Kidney (tissue), 22 donors: ENCODE measurements at regions of chr11 and their contacts with region 1.

Region 1: GRCh38 chr11:132937016-132937415 is 595.3 kb downstream of the OPCML start:
- DNase-seq: peak in 1 of 5 donors; percentile 44
- H3K4me3 ChIP-seq: no peak overlapping the region
- H3K27ac ChIP-seq: no peak overlapping the region
- H3K4me1 ChIP-seq: no peaks in the 10 kb centered on the region
- H3K27me3 ChIP-seq: no peaks in the 10 kb centered on the region
- CTCF ChIP-seq: no peak

Region 2: DNA sequence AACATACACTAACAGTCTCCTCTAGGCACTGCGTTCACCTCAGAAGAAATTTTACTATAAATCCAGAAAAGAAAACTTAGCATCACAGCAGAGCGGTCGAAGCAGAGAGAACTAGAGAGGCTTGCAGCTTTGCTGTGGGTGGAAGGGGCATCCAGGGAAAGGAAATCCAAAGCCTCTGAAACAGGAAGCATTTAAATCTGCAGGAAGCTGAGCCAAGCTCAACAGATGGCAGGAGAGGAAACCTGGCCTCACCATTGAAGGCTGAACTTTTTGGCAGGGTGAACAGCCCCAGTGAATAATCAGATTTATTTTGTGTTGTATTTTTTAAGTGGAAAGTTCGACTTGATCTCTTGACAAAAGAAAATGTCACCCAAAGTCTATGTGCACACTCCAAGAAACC is 262.9 kb before region 1 on chr11:
- intact Hi-C with region 1: loop called (anchors 10 kb)
- DNase-seq: peak in 1 of 5 donors; percentile 34
- H3K4me3 ChIP-seq: no peak overlapping the region
- H3K27ac ChIP-seq: no peak overlapping the region
- H3K4me1 ChIP-seq: no peaks in the 10 kb centered on the region
- H3K27me3 ChIP-seq: no peaks in the 10 kb centered on the region
- CTCF ChIP-seq: no peak

Region 3: DNA sequence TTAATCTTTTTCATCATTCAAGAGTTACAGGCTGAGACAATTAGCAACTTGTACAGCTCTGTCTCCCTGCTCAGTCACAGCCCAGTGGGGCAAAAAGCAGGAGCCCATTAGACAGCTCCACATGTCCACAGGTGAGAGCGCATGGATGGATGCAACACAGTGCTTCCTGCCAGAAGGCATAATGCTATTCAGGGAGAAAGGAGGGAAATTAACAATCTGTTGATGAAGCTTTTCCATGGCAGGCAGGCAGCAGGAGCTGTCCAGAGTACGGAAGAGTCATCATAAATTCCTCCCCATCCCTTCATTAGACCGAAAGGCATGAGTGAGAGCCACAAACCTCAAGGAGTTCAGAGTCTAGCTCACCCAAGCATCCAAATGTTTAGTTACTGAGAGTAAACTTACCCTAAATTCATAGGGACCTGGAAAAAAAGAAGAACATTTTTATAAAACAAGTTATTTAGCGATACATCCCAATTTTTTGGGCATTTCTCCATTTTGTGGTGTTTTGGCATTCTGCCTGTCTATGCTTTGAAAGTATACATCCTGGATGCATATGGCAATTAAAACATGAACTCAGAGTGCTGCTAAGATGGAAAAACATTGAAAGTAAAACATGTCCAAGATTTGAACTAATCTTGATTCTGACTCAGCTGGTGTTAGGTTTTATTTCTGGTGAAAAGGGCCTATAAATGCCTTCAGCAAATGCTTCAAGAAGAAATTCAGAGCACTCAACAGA is 167.2 kb after region 1 on chr11:
- intact Hi-C with region 1: no loop called
- DNase-seq: peak in 2 of 5 donors; percentile 33 to 39
- H3K4me3 ChIP-seq: no peak overlapping the region
- H3K27ac ChIP-seq: no peak overlapping the region
- H3K4me1 ChIP-seq: no peaks in the 10 kb centered on the region
- H3K27me3 ChIP-seq: no peaks in the 10 kb centered on the region
- CTCF ChIP-seq: no peak

Region 4: DNA sequence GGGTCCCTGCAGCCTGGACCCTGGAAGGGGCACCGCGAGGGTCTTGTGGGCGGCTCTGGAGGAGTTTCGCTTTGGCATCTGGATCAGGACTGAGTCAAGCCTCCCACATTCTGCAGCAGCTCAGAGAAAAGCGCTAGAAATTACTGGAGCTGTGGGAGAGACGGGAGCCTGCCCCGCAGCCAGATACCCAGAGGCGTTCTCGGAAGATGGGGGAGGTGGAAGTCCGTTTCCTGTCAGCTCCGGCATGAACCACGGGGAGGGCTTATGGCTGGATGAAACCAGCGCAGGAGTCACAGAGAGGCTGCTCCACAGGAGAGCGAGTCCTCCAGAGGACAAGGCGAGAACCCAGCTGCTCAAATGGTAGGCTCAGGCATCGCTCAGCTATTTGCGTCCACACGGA is 216.0 kb after region 1 on chr11:
- intact Hi-C with region 1: no loop called
- DNase-seq: peak in 4 of 5 donors; percentile 38 to 75 (median 50)
- H3K4me3 ChIP-seq: no peak overlapping the region
- H3K27ac ChIP-seq: no peak overlapping the region
- H3K4me1 ChIP-seq: peaks cover 0 to 2% (median 0%) of the 10 kb centered on the region in 3 donors
- H3K27me3 ChIP-seq: no peaks in the 10 kb centered on the region
- CTCF ChIP-seq: no peak